BJ (cell line): ENCODE measurements at regions of chr12 and their contacts with region 1.

Region 1: GRCh38 chr12:127108360-127109215 is 1158.4 kb upstream of the TMEM132C start:
- DNase-seq: peak; percentile 8
- H3K4me3 ChIP-seq: no peak overlapping the region
- H3K27me3 ChIP-seq: no peaks in the 10 kb centered on the region
- CTCF ChIP-seq: peak; percentile 77

Region 2: GRCh38 chr12:127008755-127009403 is 99.7 kb before region 1 on chr12:
- CTCF ChIA-PET with region 1: no interaction called
- POLR2A ChIA-PET with region 1: no interaction called
- DNase-seq: no peak
- H3K4me3 ChIP-seq: no peak overlapping the region
- H3K27me3 ChIP-seq: no peaks in the 10 kb centered on the region
- CTCF ChIP-seq: no peak

Region 3: GRCh38 chr12:127280393-127281275 is 172.0 kb after region 1 on chr12:
- CTCF ChIA-PET with region 1: interaction called, 18 read pairs
- POLR2A ChIA-PET with region 1: no interaction called
- DNase-seq: no peak
- H3K4me3 ChIP-seq: no peak overlapping the region
- H3K27me3 ChIP-seq: no peaks in the 10 kb centered on the region
- CTCF ChIP-seq: peak; percentile 67

Region 4: DNA sequence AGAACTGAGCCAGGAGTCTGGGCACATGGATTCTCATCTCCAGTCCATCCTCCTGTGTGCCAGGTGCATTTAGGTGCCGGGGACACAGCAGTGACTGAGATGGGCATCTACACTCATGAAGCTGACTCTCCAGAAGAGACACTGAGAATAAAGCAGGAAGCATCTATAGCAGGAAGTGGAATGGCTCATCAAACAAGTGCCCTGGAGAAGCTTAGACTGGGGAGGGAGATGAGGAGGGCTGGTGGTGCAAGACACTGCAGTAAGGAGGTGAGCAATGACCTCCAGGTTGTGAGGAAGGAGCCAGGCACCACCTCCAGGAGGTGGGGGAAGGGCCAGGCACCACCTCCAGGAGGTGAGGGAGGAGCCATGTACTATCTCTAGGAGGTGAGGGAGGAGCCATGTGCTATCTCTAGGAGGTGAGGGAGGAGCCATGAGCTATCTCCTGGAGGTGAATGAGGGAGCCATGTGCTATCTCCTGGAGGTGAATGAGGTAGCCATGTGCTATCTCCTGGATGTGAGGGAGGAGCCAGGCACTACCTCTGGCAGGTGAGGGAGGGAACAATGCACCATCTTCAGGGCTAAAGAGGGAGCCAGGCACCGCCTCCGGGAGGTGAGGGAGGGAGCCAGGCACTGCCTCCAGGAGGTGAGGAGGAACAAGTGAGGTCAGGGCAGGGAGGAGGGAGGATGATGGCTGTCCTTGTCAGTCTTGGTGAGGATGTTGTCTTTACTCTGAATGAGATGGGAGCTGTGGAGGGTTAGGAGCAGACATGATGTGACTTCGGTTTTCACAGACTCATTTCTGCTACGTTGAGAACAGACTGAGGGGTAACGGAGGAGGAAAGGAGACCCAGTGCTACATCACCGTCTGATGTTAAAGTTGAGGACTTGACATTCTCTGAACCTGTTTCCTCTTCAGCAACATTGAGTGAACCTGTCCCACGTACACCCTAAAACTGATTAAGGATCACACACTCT is 196.4 kb after region 1 on chr12:
- CTCF ChIA-PET with region 1: interaction called, 15 read pairs
- POLR2A ChIA-PET with region 1: no interaction called
- DNase-seq: no peak
- H3K4me3 ChIP-seq: no peak overlapping the region
- H3K27me3 ChIP-seq: no peaks in the 10 kb centered on the region; the same call in 1 of the 2 replicates
- CTCF ChIP-seq: no peak

Region 5: DNA sequence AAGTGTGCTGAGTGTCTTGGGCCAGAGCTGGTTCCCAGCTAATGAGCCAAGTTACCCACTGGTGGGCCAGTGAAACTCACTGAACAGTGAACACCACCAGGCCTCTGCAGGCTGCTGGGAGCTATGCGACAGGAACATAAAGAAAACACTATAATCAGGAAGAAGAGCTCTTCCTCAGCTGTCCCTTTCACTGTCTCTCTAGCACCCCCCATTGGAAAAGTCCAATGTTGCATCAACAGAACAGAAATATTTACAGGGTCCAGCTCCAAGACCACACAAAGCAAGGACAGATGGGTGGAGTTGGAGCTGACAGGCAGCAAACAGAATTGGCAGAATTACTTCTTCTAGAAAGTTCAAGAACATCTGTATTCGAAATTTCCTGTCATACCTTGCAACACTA is 254.8 kb after region 1 on chr12:
- CTCF ChIA-PET with region 1: interaction called, 24 read pairs
- POLR2A ChIA-PET with region 1: no interaction called
- DNase-seq: no peak
- H3K4me3 ChIP-seq: no peak overlapping the region
- H3K27me3 ChIP-seq: no peaks in the 10 kb centered on the region
- CTCF ChIP-seq: peak; percentile 36; the same call in 1 of the 2 replicates

Region 6: GRCh38 chr12:127677537-127678131 is 569.0 kb after region 1 on chr12:
- CTCF ChIA-PET with region 1: interaction called, 18 read pairs
- POLR2A ChIA-PET with region 1: no interaction called
- DNase-seq: peak; percentile 41
- H3K4me3 ChIP-seq: no peak overlapping the region
- H3K27me3 ChIP-seq: no peaks in the 10 kb centered on the region
- CTCF ChIP-seq: peak; percentile 81